GM23248 (cell line): ENCODE measurements at regions of chr6 and their contacts with region 1.

Region 1: GRCh38 chr6:63790334-63790733 is 154.7 kb downstream of the PHF3 start:
- DNase-seq: no peak
- H3K4me3 ChIP-seq: no peak overlapping the region
- H3K27ac ChIP-seq: no peak overlapping the region
- H3K4me1 ChIP-seq: peaks cover 6% of the 10 kb centered on the region
- H3K27me3 ChIP-seq: no peaks in the 10 kb centered on the region

Region 2: GRCh38 chr6:63259153-63259552 is 531.2 kb before region 1 on chr6:
- in situ Hi-C with region 1: no loop called
- DNase-seq: no peak
- H3K4me3 ChIP-seq: no peak overlapping the region
- H3K27ac ChIP-seq: no peak overlapping the region
- H3K4me1 ChIP-seq: no peaks in the 10 kb centered on the region
- H3K27me3 ChIP-seq: no peaks in the 10 kb centered on the region

Region 3: DNA sequence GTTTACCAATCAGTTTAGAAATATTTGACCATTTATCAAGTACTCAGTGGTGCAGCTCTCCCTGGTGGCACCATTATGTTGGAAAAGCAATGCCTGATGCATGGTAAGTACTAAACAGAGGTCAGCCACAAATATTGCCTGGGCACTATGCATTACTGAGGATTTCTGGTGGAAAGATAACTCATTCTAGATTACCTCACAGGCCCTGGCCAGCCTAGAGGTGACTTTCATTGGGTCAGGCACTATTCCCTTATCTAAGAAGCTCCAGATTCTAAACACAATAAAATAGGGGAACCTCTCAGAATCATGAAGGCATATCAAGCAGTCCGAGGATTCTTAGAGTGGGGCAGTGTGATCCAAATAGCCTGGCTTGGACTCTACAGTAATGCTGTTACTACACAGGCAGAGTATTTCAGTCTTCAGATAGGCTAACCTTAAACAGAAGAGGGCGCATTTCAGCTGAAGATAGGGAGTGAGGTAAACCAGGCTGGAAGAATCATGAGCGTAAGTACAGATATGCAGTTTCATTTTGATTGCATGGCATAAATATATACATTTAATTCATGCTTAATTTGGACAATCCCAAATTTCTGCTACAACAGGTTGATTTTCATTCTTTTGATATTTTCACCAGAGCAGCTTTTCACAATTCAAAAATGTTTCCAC is 482.6 kb before region 1 on chr6:
- in situ Hi-C with region 1: loop called (anchors 25 kb)
- DNase-seq: peak; percentile 75
- H3K4me3 ChIP-seq: peak overlapping the region; percentile 59
- H3K27ac ChIP-seq: no peak overlapping the region
- H3K4me1 ChIP-seq: no peaks in the 10 kb centered on the region
- H3K27me3 ChIP-seq: 0 out of 2 replicates have a peak, but pooled peaks cover 5% of the 10 kb centered on the region